Activated T-helper 1 cell treated with anti-CD3 and anti-CD28 coated beads, Interleukin-12 subunit alpha, Interleukin-12 subunit beta, Interleukin-2, Interleukin-4 antibody, amounts not matched to agents 30 ng/mL and 10 ng/mL and 1 ng/mL, durations not matched to agents 14 hours and 24 hours and 36 hours (primary cell): ENCODE measurements at regions of chr1 and their contacts with region 1.

Region 1: DNA sequence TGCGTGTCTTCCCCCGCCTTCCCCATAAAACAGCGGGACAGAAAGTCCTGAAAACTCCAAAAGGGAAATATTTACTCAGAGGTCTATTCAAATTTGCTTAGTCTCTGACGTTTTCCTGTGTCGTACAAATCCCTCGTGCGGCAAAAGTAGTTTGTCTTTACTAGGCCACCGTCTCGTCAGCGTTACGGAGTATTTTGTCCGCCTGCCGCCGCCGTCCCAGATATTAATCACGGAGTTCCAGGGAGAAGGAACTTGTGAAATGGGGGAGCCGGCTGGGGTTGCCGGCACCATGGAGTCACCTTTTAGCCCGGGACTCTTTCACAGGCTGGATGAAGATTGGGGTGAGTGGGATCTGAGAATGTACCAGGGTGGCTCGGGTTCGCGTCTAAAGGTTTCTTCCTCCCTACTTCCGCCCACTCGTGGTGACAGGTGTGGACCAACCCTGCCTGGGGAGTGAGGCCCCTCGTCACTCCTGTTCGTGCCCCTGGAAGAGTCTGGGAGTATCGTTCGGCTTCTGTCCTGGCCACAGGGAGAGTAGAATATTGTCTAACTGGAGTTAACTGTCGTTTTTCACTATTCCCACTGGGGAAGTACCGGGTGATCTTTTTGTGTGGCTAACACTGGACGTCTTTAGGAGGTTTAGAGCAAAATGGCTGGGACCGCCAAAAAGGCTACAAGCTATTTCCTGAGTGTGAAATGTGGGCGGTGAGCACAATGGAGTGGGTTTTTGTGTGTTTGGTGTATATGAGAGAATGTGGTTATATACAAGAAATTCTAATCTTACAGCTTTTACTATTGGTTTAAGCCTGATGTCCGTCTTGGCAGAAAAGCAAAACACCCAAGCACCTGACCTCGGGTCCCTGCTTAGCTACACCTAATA is at the start of gene ATF6:
- DNase-seq: peak; percentile 77
- H3K4me3 Mint-ChIP-seq: peak within 1 kb of the TSS; percentile 97
- H3K27ac Mint-ChIP-seq: peak within 1 kb of the TSS; percentile 94
- H3K4me1 Mint-ChIP-seq: peaks cover 37% of the 10 kb centered on the region
- H3K27me3 Mint-ChIP-seq: no peaks in the 10 kb centered on the region
- total RNA-seq, gene ATF6: 23.9 and 25.5 TPM in 2 replicates

Region 2: GRCh38 chr1:161393151-161393550 is 373.2 kb before region 1 on chr1:
- intact Hi-C with region 1: no loop called
- DNase-seq: no peak
- H3K4me3 Mint-ChIP-seq: no peak overlapping the region
- H3K27ac Mint-ChIP-seq: peak overlapping the region; percentile 11
- H3K4me1 Mint-ChIP-seq: peaks cover 40% of the 10 kb centered on the region
- H3K27me3 Mint-ChIP-seq: no peaks in the 10 kb centered on the region

Region 3: DNA sequence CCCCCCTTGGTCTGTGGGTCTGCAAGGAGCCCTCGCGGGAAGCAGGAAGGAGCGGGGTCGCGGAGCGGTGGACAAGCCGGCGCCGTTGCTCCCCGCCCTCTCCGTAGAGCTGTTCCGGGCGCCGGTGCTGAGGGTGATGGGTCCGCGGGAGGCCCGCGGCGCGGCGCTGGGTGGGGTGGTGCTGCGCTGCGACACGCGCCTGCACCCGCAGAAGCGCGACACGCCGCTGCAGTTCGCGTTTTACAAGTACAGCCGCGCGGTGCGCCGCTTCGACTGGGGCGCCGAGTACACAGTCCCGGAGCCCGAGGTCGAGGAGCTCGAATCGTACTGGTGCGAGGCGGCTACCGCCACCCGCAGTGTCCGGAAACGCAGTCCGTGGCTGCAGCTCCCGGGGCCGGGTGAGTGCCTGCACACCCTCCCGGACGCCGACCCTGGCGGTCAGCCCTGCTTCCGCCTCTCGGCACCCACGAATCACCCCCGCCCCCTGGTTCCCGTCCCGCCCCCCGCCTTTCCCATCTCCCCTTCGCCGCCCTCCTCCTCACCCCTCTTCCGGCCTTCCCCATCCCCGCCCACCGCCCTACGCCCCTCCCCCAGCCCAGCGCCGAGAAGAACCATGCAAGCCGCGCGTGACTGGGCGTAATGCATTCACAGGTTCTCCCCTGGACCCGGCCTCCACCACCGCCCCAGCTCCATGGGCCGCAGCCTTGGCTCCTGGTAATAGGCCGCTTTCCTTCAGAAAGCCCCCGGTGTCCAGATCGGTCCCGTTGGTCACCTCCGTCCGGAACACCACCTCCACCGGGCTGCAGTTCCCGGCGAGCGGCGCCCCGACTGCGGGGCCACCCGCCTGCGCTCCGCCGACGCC is 39.5 kb before region 1 on chr1:
- intact Hi-C with region 1: loop called (anchors 1 kb)
- DNase-seq: peak; percentile 50
- H3K4me3 Mint-ChIP-seq: peak overlapping the region; percentile 86
- H3K27ac Mint-ChIP-seq: no peak overlapping the region
- H3K4me1 Mint-ChIP-seq: peaks cover 48% of the 10 kb centered on the region
- H3K27me3 Mint-ChIP-seq: peaks cover 64% of the 10 kb centered on the region

Region 4: GRCh38 chr1:161792740-161793139 is 26.4 kb after region 1 on chr1:
- intact Hi-C with region 1: loop called (anchors 1 kb)
- DNase-seq: no peak
- H3K4me3 Mint-ChIP-seq: no peak overlapping the region
- H3K27ac Mint-ChIP-seq: no peak overlapping the region
- H3K4me1 Mint-ChIP-seq: peaks cover 22% of the 10 kb centered on the region
- H3K27me3 Mint-ChIP-seq: no peaks in the 10 kb centered on the region

Region 5: DNA sequence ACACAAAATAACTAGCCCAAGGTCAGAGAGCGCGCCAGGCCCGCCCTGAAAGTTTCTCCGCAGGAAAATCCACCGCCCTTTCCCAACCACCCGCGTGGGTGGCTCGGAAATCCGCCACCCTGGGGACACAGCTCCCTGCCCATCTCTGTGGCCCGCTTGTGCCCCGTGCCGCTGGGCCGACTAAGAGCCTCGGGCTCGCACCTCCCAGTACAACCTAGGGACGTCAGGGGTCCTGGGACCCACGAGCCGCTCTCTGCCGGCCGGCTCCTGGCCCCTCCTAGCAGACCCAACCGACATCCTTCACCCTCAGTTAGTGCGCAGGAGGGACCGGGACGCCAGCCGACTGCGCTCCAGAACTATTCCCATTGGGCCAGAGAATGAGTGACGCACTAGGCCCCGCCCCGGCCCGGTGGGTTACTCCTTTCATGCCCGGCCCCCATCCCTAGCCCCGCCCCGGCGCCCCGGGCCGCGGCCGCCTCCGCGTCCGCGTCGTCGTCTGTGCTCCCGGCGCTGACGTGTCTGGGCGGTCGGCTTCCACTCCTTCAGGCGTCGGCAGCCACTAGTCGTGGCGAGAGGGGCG is 794.8 kb after region 1 on chr1:
- intact Hi-C with region 1: loop called (anchors 5 kb)
- DNase-seq: peak; percentile 96
- H3K4me3 Mint-ChIP-seq: peak overlapping the region; percentile 87
- H3K27ac Mint-ChIP-seq: peak overlapping the region; percentile 93
- H3K4me1 Mint-ChIP-seq: peaks cover 49% of the 10 kb centered on the region
- H3K27me3 Mint-ChIP-seq: no peaks in the 10 kb centered on the region